ENCODE measurements at regions of chr20 and their contacts with region 1.

Region 1: GRCh38 chr20:35883778-35884540 is 70.3 kb downstream of the SCAND1 start:
- DNase-seq: peak; percentile 73 to 86
- ATAC-seq: peak; percentile 82 to 87
- H3K4me3 ChIP-seq: no peak overlapping the region
- H3K27ac ChIP-seq: peak overlapping the region; percentile 78 to 92 (median 84)
- H3K4me1 ChIP-seq: peaks cover 25 to 40% of the 10 kb centered on the region in 2 donors
- H3K27me3 ChIP-seq: no peaks in the 10 kb centered on the region
- CTCF ChIP-seq: peak; percentile 78 to 83 (median 82)
- POLR2A ChIP-seq: peak; percentile 7 to 25

Region 2: DNA sequence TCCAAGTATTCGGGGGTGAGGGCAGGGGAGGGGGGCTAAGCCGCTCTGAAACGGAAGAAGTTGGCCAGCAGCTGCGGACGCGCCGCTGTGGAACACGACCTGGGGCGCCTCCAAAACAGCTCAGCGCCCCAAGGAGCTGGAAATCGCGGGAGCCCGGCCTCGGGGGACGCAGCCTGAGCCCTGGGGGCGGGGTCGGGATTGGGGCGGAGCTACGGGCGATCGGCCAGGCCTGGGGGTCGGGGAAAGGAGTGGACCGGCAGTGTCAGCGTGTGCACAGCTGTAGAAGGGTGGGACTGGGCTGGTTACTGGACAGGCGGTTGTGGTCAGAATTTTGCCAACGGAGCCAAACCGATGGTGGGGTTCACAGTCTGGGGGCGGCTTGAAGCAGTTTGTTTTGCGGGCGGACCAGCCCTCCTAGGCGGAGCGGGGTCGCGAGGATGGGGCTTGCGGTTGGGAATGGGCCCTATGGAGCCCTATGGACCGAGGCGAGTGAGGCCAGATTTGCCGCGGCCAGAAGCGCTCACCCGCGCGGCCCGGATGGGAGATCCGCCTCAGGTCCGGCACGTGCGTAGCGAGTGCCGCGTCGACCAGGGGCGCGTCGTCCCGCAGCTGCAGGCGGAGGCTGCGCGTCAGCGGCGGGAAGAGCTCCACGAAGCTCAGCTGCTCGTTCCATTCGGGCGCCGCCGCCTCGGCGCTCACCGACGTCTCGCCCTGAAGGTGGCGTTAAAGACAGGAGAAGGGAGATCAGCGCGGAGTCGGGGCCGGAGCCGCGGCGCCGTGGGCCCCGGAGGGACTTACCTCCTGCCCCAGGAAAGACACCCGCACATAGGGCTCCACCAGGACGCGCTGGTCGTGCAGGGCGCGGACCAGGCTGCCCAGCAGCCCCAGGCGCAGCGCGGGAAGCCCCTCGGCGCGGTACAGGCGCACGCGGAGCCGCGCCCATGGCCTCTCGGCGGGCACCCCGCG is 282.7 kb before region 1 on chr20:
- in situ Hi-C with region 1: no loop called
- intact Hi-C with region 1: loop called (anchors 2 kb)
- DNase-seq: peak; percentile 64 to 72
- ATAC-seq: peak; percentile 89 to 92
- H3K4me3 ChIP-seq: peak overlapping the region; percentile 52 to 65 (median 58)
- H3K27ac ChIP-seq: peak overlapping the region in 1 of 4 donors; percentile 15
- H3K4me1 ChIP-seq: peaks cover 6 to 10% of the 10 kb centered on the region in 2 donors
- H3K27me3 ChIP-seq: peaks cover 4 to 12% (median 11%) of the 10 kb centered on the region in 3 donors
- CTCF ChIP-seq: peak in 4 of 5 experiments; percentile 39 to 68 (median 52)
- POLR2A ChIP-seq: no peak

Region 3: DNA sequence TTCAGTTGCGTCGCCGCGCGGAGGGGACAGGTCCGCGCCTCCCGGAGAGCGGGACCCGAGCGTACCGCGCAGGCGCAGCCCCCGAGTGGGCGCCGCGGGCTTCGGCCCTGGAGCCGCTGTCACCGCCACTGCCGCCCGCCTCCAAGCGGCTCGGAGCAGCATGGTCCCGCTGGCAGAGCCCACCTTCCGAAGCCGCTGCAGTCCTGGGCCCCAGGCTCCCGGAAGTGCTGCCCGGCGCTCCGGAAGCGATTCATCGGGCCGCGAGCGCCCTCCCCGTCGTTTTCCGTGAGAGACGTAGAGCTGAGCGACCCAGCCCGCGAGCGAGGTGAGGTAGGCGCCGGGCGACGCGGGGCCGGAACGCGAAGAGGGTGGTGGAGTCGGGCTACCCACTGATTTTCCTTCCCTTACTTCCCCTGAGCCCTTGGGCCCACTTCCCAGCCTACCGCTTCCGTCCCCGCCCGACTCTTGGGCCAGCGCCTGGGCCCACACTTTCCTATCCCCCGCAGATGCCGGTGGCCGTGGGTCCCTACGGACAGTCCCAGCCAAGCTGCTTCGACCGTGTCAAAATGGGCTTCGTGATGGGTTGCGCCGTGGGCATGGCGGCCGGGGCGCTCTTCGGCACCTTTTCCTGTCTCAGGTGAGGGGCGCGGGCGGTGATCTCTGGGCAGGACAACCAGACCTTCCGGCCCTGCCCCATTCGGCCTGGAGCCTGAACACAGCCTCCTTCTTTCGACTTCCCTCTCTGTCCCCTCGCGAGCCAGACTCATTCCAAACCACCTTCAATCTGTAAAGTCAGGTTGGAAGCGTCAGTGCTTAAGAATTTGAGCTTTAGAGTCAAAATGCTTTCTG is 184.6 kb before region 1 on chr20 and contains the starts of genes NFS1 and ROMO1:
- in situ Hi-C with region 1: loop called in 1 of 4 experiments (anchors 25 kb)
- intact Hi-C with region 1: loop called (anchors 1 kb)
- DNase-seq: peak; percentile 69 to 86
- ATAC-seq: peak; percentile 88 to 90
- H3K4me3 ChIP-seq: peak within 1 kb of the TSS; percentile 85 to 95 (median 92)
- H3K27ac ChIP-seq: peak within 1 kb of the TSS; percentile 88 to 97 (median 96)
- H3K4me1 ChIP-seq: peaks cover 28 to 40% of the 10 kb centered on the region in 2 donors
- H3K27me3 ChIP-seq: no peaks in the 10 kb centered on the region
- CTCF ChIP-seq: peak; percentile 5 to 35 (median 25)
- POLR2A ChIP-seq: peak; percentile 60 to 84
- total RNA-seq, gene NFS1: 31.5 to 85.8 (median 37.2) TPM
- total RNA-seq, gene ROMO1: 213 to 491 (median 309) TPM

Region 4: GRCh38 chr20:35741892-35742740 is 141.8 kb before region 1 on chr20 and contains the start of gene RBM39:
- in situ Hi-C with region 1: loop called in 3 of 4 experiments (anchors 5 to 25 kb)
- intact Hi-C with region 1: loop called (anchors 1 kb)
- DNase-seq: peak; percentile 100
- ATAC-seq: peak; percentile 91 to 95
- H3K4me3 ChIP-seq: peak within 1 kb of the TSS; percentile 80 to 96 (median 88)
- H3K27ac ChIP-seq: peak within 1 kb of the TSS; percentile 96 to 100 (median 98)
- H3K4me1 ChIP-seq: peaks cover 37 to 39% of the 10 kb centered on the region in 2 donors
- H3K27me3 ChIP-seq: no peaks in the 10 kb centered on the region
- CTCF ChIP-seq: peak; percentile 28 to 48 (median 39)
- POLR2A ChIP-seq: peak; percentile 97 to 98
- total RNA-seq, gene RBM39: 98.5 to 165 (median 130) TPM

Region 5: GRCh38 chr20:35828434-35828833 is 55.5 kb before region 1 on chr20:
- in situ Hi-C with region 1: no loop called
- intact Hi-C with region 1: loop called (anchors 5 kb)
- DNase-seq: peak; percentile 80 to 94
- ATAC-seq: peak; percentile 95 to 97
- H3K4me3 ChIP-seq: no peak overlapping the region
- H3K27ac ChIP-seq: peak overlapping the region; percentile 78 to 91 (median 84)
- H3K4me1 ChIP-seq: peaks cover 32 to 34% of the 10 kb centered on the region in 2 donors
- H3K27me3 ChIP-seq: no peaks in the 10 kb centered on the region
- CTCF ChIP-seq: no peak
- POLR2A ChIP-seq: no peak

Region 6: DNA sequence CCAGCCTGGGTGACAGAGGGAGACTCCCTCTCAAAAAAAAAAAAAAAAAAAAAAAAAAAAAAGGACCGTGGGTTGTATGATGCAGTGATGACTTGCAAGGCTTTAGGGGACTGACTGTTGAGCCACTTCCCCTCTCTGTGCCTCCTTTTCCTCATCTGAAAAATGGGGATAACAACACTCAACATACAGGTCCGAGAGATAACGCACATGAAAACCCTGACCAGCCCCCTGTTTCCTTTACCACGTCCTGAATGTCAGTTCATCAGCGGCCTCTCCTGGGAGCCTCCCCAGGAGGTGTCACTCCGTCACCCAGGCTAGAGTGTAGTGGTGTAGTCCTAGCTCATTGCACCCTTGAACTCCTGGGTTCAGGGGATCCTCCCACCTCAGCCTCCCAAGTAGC is 758.2 kb after region 1 on chr20:
- in situ Hi-C with region 1: no loop called
- intact Hi-C with region 1: no loop called
- DNase-seq: no peak
- ATAC-seq: no peak
- H3K4me3 ChIP-seq: no peak overlapping the region
- H3K27ac ChIP-seq: no peak overlapping the region
- H3K4me1 ChIP-seq: no peaks in the 10 kb centered on the region
- H3K27me3 ChIP-seq: no peaks in the 10 kb centered on the region
- CTCF ChIP-seq: no peak
- POLR2A ChIP-seq: no peak